ENCODE measurements at regions of chr20 and their contacts with region 1.

Region 1: DNA sequence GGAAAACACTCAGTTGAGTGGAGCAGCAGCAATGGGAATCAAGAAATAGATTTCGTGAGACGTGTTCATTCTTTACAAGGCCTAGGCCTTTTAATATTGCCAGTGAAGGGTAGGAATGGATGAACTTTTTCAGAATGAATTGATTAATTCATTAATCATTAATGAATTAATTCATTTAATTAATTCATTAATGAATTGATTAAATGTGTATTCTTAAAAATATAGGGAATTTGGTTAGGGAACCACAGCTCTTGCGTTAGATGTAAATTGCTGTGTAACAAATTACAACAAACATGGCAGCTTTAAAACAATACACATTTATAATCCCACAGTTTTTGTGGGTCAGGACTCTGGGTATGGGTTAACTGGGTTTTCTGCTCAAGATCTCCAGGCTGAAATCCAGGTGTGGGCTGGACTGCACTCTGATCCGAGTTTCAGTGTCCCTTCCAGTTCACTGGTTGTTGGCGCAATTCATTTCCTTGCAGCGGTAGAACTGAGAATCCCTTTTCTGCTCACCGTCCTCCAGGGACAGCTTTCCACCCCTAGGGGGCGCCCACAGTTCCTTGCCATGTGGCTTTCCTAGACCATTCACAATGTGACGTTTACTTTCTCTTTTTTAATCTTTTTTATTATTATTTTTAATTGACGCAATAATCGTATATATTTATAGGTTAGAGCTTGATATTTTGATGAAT is 32.8 kb upstream of the BCAS1 start:
- DNase-seq: no peak
- H3K4me3 ChIP-seq: no peak overlapping the region
- H3K27ac ChIP-seq: no peak overlapping the region
- H3K27me3 ChIP-seq: no peaks in the 10 kb centered on the region
- CTCF ChIP-seq: peak; percentile 96

Region 2: DNA sequence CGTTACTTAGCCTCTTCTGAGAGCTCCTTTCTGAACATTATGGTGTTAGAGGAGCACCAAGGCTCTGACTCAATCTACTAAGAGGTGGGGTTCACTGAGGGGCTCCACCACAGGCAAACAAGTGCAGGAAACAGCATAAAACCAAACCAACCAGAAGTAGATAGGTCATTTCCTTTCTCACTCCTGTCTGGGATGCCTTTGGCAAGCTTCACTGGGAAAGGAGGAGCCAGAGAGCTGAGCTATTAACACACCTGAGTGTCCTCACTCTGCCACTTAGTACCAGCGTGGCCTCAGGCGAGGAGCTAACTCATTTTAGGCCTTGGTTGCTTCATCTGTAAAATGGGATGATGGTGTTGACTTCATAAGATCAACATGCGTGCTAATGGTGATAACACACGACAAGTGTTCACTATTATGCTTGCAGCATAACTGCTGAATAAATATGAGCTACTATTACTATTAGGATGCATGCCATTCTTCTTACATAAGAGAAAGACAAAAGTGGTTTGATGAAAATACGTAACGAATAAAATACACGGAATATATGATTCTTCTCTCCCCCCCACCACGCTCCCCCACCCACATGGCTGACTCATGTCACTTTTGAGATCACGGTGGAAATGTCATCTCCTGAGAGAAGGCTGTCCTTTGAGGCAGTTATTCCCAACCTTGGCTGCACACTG is 218.2 kb before region 1 on chr20:
- CTCF ChIA-PET with region 1: no interaction called
- POLR2A ChIA-PET with region 1: no interaction called
- DNase-seq: no peak
- H3K4me3 ChIP-seq: no peak overlapping the region
- H3K27ac ChIP-seq: peak overlapping the region; percentile 11
- H3K27me3 ChIP-seq: no peaks in the 10 kb centered on the region
- CTCF ChIP-seq: no peak

Region 3: DNA sequence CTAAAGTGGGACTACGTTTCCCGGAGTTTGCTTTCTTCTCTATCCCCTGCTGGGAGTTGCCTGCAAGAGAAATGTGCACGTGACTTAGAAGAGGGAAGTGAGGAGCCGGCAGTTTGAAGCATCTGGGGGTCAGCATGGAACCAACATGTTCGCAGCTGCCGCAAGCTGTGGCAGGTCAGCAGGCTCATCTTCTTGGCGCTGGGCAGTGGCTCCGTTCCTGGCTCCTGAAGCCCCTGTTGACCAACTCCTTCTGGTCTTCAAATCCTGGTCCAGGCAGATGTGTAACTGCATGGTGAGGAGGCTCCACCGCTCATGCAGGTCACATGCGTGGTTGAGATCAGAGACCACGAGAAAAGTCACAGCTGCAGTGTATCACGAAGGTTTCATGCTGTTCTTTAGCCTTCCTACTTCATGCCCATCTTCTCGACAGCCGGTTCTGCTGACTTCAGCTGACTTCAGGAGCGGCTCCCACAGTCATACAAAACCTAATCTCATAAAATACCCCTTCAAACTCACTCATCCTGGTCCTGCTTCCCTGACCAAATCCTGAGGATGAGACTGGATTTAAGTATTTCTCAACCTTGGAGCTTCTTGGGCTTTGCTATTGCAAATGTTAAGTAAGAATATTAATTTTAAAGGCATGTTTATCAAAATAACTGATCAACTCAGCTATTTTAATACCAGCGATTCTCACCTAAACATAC is 12.1 kb after region 1 on chr20:
- CTCF ChIA-PET with region 1: interaction called, 21 read pairs
- POLR2A ChIA-PET with region 1: no interaction called
- DNase-seq: no peak
- H3K4me3 ChIP-seq: no peak overlapping the region
- H3K27ac ChIP-seq: peak overlapping the region; percentile 88
- H3K27me3 ChIP-seq: no peaks in the 10 kb centered on the region
- CTCF ChIP-seq: no peak

Region 4: GRCh38 chr20:54140927-54141566 is 37.8 kb after region 1 on chr20:
- CTCF ChIA-PET with region 1: interaction called, 12 read pairs
- POLR2A ChIA-PET with region 1: interaction called, 3 read pairs
- DNase-seq: no peak
- H3K4me3 ChIP-seq: no peak overlapping the region
- H3K27ac ChIP-seq: no peak overlapping the region
- H3K27me3 ChIP-seq: no peaks in the 10 kb centered on the region
- CTCF ChIP-seq: no peak

Region 5: GRCh38 chr20:54167909-54168872 is 65.0 kb after region 1 on chr20:
- CTCF ChIA-PET with region 1: interaction called, 11 read pairs
- POLR2A ChIA-PET with region 1: no interaction called
- DNase-seq: no peak
- H3K4me3 ChIP-seq: no peak overlapping the region
- H3K27ac ChIP-seq: no peak overlapping the region
- H3K27me3 ChIP-seq: peaks cover 44% of the 10 kb centered on the region
- CTCF ChIP-seq: no peak

Region 6: GRCh38 chr20:54179946-54180345 is 76.7 kb after region 1 on chr20:
- CTCF ChIA-PET with region 1: interaction called, 15 read pairs
- POLR2A ChIA-PET with region 1: no interaction called
- DNase-seq: no peak
- H3K4me3 ChIP-seq: no peak overlapping the region
- H3K27ac ChIP-seq: no peak overlapping the region
- H3K27me3 ChIP-seq: peaks cover 11% of the 10 kb centered on the region
- CTCF ChIP-seq: no peak

Region 7: GRCh38 chr20:54207743-54208547 is 104.7 kb after region 1 on chr20 and contains the start of gene PFDN4:
- CTCF ChIA-PET with region 1: interaction called, 951 read pairs
- POLR2A ChIA-PET with region 1: no interaction called
- DNase-seq: peak; percentile 56
- H3K4me3 ChIP-seq: peak within 1 kb of the TSS; percentile 94
- H3K27ac ChIP-seq: peak within 1 kb of the TSS; percentile 95
- H3K27me3 ChIP-seq: no peaks in the 10 kb centered on the region
- CTCF ChIP-seq: peak; percentile 81
- polyA plus RNA-seq, gene PFDN4: 63.9 and 104 TPM in 2 replicates

Measured in AG04450 (cell line).